ENCODE measurements at regions of chr15 and their contacts with region 1.

Region 1: DNA sequence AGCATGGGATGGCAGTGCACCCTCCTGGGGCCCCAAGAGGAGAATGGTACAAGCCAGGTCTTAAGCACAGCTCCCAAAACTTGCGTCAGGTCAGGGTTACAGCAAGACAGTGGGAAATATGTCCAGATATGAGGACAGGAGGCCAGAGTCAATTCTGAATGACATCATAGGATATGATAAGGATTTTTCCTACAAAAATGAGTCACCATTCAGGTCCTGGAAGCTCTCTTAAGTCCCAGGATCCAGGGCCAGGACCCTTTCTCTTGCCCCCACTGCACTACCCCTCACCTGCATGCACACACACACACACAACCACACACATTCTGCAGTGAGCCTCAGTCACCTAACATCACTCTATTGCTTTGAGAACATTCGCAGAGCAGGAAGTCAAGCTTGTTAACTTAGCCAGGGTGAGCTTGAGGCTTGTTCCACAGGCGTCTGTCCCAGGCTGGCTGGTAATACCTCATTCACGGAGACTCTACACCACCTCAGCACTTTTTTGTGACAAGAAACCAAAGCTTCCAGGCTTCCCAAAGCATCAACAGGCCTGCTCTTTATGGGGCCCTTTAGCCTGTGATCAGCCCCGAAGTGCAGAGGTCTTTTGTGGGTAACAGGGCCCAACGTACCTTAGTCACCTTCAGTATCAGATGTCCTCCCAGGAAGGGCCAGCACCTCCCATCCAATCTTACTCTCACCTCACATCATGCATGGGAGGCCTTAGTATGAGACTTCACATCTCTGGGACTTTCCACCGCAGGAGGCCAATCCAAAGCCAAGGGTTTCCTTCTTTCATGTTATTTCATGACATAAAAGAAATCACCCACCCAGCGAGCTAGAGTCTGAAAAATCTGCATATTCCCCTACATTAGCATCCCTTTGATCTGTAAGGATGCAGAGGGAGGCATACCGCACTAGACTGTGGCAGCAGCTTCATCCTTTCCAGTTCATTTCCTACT is 74.0 kb upstream of the LIPC start:
- DNase-seq: peak in 5 of 9 experiments; percentile 13 to 81 (median 51)
- ATAC-seq: peak; percentile 81
- H3K4me3 ChIP-seq: no peak overlapping the region
- H3K4me3 Mint-ChIP-seq: peak overlapping the region; percentile 1
- H3K27ac ChIP-seq: peak overlapping the region in 1 of 2 experiments; percentile 48
- H3K27ac Mint-ChIP-seq: peak overlapping the region; percentile 77
- H3K4me1 ChIP-seq: peaks cover 25% of the 10 kb centered on the region
- H3K4me1 Mint-ChIP-seq: peaks cover 25% of the 10 kb centered on the region
- H3K27me3 ChIP-seq: no peaks in the 10 kb centered on the region
- H3K27me3 Mint-ChIP-seq: no peaks in the 10 kb centered on the region
- CTCF ChIP-seq: no peak

Region 2: DNA sequence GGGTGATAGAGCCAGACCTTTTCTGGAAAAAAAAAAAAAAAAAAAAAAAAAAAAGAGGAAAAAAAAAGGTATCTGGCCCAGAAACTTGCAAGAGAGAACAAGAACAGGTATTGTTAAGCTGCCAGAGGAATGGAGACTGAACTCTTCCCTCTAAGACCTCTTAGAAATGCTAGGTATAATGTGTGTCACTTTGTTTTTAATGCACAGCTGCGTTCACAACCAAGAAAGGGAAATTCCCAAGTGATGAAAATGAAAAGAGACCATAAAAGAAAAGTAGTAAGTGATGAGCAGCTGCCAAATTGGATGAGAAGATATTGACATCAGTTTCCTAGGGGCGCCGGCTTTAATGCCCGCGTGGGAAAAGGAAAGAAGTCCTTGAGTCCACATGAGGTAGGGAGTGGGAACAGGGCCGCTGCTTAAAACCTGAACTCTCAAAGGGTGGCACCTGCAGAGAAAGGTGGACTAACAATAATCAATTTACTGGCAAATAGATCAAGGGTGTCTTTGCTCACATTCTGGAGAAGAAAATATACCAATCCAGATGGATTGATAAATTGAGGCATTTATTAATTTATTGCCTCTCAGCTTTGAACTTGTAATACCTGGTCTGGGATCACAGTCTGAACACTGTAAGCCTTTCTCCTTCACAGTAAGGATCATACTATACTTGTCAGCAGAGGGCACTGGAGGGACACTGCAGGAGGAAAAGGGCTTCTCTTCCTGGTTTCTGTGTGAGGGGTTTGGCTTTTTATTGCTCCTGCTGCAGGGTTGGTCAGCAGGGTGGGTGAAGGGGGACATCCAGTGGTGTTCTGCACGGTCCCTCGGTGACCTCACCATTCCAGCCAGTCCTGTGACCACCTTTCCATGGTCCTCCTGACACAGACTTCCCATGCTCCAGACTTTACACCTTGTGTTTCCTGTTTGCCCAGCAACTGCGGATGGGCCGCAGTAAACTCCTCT is 88.1 kb before region 1 on chr15:
- CTCF ChIA-PET with region 1: no interaction called
- POLR2A ChIA-PET with region 1: no interaction called
- intact Hi-C with region 1: no loop called
- DNase-seq: peak in 6 of 9 experiments; percentile 11 to 68 (median 35)
- ATAC-seq: no peak
- H3K4me3 ChIP-seq: no peak overlapping the region
- H3K4me3 Mint-ChIP-seq: no peak overlapping the region
- H3K27ac ChIP-seq: no peak overlapping the region
- H3K27ac Mint-ChIP-seq: no peak overlapping the region
- H3K4me1 ChIP-seq: peaks cover 4% of the 10 kb centered on the region
- H3K4me1 Mint-ChIP-seq: peaks cover 9% of the 10 kb centered on the region
- H3K27me3 ChIP-seq: no peaks in the 10 kb centered on the region
- H3K27me3 Mint-ChIP-seq: no peaks in the 10 kb centered on the region
- CTCF ChIP-seq: peak; percentile 33

Region 3: GRCh38 chr15:58378254-58379085 is 20.7 kb after region 1 on chr15:
- CTCF ChIA-PET with region 1: no interaction called
- POLR2A ChIA-PET with region 1: no interaction called
- intact Hi-C with region 1: loop called in 1 of 2 experiments (anchors 2 kb)
- DNase-seq: no peak
- ATAC-seq: no peak
- H3K4me3 ChIP-seq: no peak overlapping the region
- H3K4me3 Mint-ChIP-seq: no peak overlapping the region
- H3K27ac ChIP-seq: no peak overlapping the region
- H3K27ac Mint-ChIP-seq: no peak overlapping the region
- H3K4me1 ChIP-seq: no peaks in the 10 kb centered on the region
- H3K4me1 Mint-ChIP-seq: no peaks in the 10 kb centered on the region
- H3K27me3 ChIP-seq: no peaks in the 10 kb centered on the region
- H3K27me3 Mint-ChIP-seq: no peaks in the 10 kb centered on the region
- CTCF ChIP-seq: no peak

Region 4: DNA sequence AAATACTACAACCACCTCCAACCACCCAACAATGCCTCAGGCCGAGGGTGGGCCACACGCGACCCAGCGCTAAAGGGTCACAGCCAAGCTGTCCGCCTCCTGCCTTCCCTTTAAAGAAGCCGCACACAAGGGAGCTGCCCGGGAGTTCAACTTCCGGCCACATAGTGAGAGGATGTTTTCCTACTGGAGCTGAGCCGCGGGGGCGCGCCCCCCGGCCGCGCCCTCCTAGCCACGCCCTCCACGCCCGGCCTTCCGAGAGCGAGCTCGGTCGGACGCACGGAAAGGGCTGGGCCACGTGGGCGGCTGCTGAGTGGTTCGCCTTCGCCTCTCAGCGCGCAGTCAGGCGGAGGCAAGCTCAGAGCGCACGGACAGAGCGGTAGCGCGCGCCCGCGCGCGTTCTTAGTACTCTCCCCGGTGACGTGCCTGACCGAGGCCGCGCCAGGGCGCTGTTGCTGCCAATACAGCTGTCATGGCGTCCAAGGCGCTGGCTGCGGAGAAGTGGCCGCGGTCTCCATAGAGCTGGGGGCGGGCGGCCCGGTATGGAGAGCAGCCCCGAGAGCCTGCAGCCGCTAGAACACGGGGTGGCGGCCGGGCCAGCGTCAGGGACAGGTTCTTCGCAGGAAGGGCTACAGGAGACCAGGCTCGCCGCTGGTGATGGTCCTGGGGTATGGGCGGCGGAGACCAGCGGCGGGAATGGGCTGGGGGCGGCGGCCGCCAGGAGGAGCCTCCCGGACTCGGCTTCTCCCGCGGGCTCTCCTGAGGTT is 413.2 kb after region 1 on chr15 and contains the start of gene MINDY2:
- CTCF ChIA-PET with region 1: no interaction called
- POLR2A ChIA-PET with region 1: interaction called, 10 read pairs
- intact Hi-C with region 1: no loop called
- DNase-seq: peak; percentile 83 to 97 (median 94)
- ATAC-seq: peak; percentile 94
- H3K4me3 ChIP-seq: peak within 1 kb of the TSS; percentile 98
- H3K4me3 Mint-ChIP-seq: peak within 1 kb of the TSS; percentile 92
- H3K27ac ChIP-seq: peak within 1 kb of the TSS; percentile 86 to 89
- H3K27ac Mint-ChIP-seq: peak within 1 kb of the TSS; percentile 94
- H3K4me1 ChIP-seq: peaks cover 34% of the 10 kb centered on the region
- H3K4me1 Mint-ChIP-seq: peaks cover 22% of the 10 kb centered on the region
- H3K27me3 ChIP-seq: no peaks in the 10 kb centered on the region
- H3K27me3 Mint-ChIP-seq: no peaks in the 10 kb centered on the region
- CTCF ChIP-seq: no peak
- total RNA-seq, gene MINDY2: 4.7 to 4.9 TPM

Measured in CD8-positive, alpha-beta T cell (primary cell).